Posterior vena cava (tissue), 2 donors: ENCODE measurements at regions of chr6 and their contacts with region 1.

Region 1: GRCh38 chr6:33075568-33076405 is at the start of gene HLA-DPB1:
- DNase-seq: no peak
- total RNA-seq, gene HLA-DPB1: 37.4 to 63.9 TPM

Region 2: DNA sequence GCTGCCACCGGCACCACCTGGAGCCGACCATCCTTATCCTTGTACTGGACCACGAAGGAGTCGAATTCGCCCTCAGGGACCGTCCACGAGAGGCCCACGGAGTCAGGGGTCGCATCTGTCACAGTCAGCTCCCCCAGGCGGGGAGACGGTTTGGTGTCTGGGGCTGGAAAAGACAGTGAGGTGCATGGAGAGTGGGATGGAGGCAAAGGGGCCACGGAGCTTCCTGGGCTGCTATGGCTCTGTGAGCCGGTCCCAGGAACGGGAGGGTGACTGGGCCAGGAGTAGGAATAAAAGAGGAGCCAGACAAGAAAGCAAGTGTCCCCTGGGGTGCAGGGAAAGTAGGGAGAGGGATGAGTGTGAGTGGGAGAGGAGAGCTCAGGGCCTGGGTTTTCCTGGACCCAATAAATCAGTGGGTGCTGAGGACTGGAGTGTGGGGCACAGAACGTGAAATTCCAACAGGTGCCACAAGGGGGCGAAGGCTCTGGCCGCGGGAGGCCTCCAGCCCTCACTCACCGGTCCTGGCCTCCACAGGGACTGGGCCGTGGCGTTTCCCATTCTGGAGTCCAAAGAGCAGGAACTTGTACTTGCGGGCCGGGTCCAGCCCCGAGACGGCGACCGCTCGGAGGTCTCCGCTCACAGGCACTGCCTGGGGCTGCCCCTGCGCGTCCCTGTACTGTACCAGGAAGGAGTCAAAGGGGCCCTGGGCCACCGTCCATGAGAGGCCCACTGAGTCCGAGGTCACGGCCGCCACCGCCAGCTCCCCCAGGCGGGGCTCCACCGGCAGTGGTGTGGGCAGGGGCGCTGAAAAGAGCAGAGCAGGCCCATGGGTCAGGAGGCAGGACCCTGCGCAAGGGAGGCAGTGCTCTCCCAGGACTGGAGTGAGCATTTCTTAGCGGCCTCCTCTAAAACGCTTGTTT is 1027.7 kb before region 1 on chr6:
- intact Hi-C with region 1: no loop called
- DNase-seq: peak; percentile 91

Region 3: DNA sequence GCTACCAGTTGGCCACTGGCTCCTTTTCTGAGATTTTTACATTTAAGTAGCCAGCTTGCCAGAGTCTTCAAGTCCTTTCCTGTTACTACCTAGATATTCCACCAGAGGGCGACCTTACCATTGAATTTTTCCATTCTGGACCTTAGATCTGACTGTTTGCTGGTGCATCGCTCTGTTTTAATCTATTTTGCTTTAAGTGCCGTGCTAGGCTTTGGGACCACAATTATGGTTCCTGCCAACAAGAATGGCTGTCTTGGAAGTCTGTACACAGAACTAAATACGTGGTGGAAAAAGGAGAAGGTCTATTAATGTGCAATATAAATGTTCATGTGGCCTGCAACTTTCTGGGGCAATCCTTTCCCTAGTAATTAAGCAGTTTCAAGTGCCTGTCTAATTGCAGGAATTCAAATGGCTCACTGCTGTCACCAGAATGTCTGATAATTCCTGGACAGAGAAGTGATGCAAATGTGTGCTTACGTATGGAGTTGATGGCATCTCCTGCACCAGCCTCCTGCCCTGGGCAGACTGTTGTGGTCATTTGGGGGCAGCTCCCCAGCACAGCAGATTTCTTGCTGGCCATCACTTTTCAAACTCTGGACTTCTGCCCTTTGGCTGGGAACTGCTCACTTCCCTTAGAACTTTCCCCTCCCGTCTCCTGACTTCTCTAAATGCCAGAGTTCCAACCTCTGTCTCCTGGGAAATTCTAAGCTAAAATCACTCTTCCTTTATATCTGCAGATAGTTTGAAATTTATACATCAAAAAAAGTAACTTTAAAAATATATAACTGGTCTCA is 60.7 kb before region 1 on chr6:
- intact Hi-C with region 1: loop called in 1 of 2 experiments (anchors 5 kb)
- DNase-seq: no peak

Region 4: GRCh38 chr6:33049323-33050013 is 26.3 kb before region 1 on chr6:
- intact Hi-C with region 1: no loop called
- DNase-seq: no peak

Region 5: DNA sequence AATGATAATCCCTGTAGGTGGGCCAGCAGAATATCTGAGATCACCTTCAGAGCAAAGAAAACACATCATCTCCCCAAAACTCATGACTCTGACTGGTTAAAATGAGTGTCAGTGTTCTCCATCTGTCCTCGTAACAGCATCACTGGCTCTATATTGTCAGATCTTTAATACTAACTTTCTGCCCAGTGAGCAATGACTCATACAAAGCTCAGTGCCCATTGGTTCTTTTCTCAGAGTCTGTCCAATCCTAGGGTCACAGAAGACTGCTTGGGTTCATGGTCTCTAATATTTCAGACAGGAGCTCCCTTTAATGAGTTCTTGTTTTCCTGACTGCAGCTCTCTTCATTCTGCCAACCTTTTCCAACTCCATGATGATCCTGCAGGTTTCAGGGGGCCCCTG is 36.4 kb after region 1 on chr6:
- intact Hi-C with region 1: loop called in 1 of 2 experiments (anchors 1 kb)
- DNase-seq: no peak